Esophagus squamous epithelium (tissue), 5 donors: ENCODE measurements at regions of chr12 and their contacts with region 1.

Region 1: GRCh38 chr12:96578526-96579125 is 89.2 kb downstream of the CFAP54 start:
- DNase-seq: no peak
- H3K4me3 ChIP-seq: no peak overlapping the region
- H3K27ac ChIP-seq: no peak overlapping the region
- H3K4me1 ChIP-seq: peaks cover 0 to 4% (median 0%) of the 10 kb centered on the region in 3 donors
- H3K27me3 ChIP-seq: no peaks in the 10 kb centered on the region
- CTCF ChIP-seq: peak in 5 of 6 experiments; percentile 25 to 67 (median 42)
- POLR2A ChIP-seq: no peak

Region 2: DNA sequence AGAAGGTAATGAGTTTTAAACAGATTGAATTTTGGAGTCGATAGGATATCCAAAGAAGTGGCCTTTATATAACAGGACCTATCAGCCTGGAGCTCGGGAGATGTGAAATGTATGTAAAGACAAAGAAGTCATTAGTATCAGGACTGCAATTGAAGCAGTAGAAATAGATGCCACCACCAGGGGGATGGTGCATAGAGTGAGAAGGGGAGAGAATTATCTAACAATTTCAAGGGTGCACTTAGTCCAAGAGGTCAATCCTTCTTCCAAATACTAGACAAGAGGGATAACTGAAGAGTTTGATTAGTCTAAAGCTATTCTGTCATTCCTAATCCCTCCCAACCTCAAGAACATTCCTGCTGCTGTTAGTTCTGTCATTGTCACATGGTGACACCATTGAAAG is 38.6 kb after region 1 on chr12:
- intact Hi-C with region 1: no loop called
- DNase-seq: no peak
- H3K4me3 ChIP-seq: no peak overlapping the region
- H3K27ac ChIP-seq: no peak overlapping the region
- H3K4me1 ChIP-seq: no peaks in the 10 kb centered on the region
- H3K27me3 ChIP-seq: peaks cover 0 to 53% (median 0%) of the 10 kb centered on the region in 4 donors
- CTCF ChIP-seq: peak in 1 of 6 experiments; percentile 14
- POLR2A ChIP-seq: no peak

Region 3: GRCh38 chr12:97312570-97313135 is 734.0 kb after region 1 on chr12:
- intact Hi-C with region 1: loop called (anchors 10 kb)
- DNase-seq: no peak
- H3K4me3 ChIP-seq: no peak overlapping the region
- H3K27ac ChIP-seq: no peak overlapping the region
- H3K4me1 ChIP-seq: no peaks in the 10 kb centered on the region
- H3K27me3 ChIP-seq: peaks cover 0 to 3% (median 0%) of the 10 kb centered on the region in 4 donors
- CTCF ChIP-seq: no peak
- POLR2A ChIP-seq: no peak